ENCODE measurements at regions of chr12 and their contacts with region 1.

Region 1: GRCh38 chr12:751192-751998 is 984 bp upstream of the WNK1 start:
- DNase-seq: peak; percentile 94 to 99
- ATAC-seq: peak; percentile 70 to 85
- H3K4me3 ChIP-seq: peak overlapping the region; percentile 49
- H3K27ac ChIP-seq: peak overlapping the region; percentile 79 to 90
- H3K4me1 ChIP-seq: peaks cover 19% of the 10 kb centered on the region
- CTCF ChIP-seq: peak; percentile 80
- EP300 ChIP-seq: no peak
- POLR2A ChIP-seq: peak; percentile 73
- RAD21 ChIP-seq: peak; percentile 86 to 89

Region 2: GRCh38 chr12:569803-570434 is 181.5 kb before region 1 on chr12:
- CTCF ChIA-PET with region 1: interaction called, 292 read pairs
- POLR2A ChIA-PET with region 1: interaction called, 77 read pairs
- DNase-seq: peak; percentile 87 to 95
- ATAC-seq: peak; percentile 37 to 69
- H3K4me3 ChIP-seq: peak overlapping the region; percentile 62
- H3K27ac ChIP-seq: peak overlapping the region; percentile 97 to 98
- H3K4me1 ChIP-seq: peaks cover 30% of the 10 kb centered on the region
- CTCF ChIP-seq: peak; percentile 92
- EP300 ChIP-seq: no peak
- POLR2A ChIP-seq: no peak
- RAD21 ChIP-seq: peak; percentile 95 to 98

Region 3: GRCh38 chr12:597926-598568 is 153.3 kb before region 1 on chr12:
- CTCF ChIA-PET with region 1: interaction called, 16 read pairs
- POLR2A ChIA-PET with region 1: interaction called, 4 read pairs
- DNase-seq: no peak
- ATAC-seq: peak in 1 of 2 experiments; percentile 53; a peak in 3 of 6 replicates
- H3K4me3 ChIP-seq: no peak overlapping the region
- H3K27ac ChIP-seq: peak overlapping the region in 1 of 2 experiments; percentile 8; a peak in 2 of 6 replicates
- H3K4me1 ChIP-seq: 0 out of 3 replicates have a peak, but pooled peaks cover 3% of the 10 kb centered on the region
- CTCF ChIP-seq: no peak
- EP300 ChIP-seq: no peak
- POLR2A ChIP-seq: no peak
- RAD21 ChIP-seq: no peak

Region 4: DNA sequence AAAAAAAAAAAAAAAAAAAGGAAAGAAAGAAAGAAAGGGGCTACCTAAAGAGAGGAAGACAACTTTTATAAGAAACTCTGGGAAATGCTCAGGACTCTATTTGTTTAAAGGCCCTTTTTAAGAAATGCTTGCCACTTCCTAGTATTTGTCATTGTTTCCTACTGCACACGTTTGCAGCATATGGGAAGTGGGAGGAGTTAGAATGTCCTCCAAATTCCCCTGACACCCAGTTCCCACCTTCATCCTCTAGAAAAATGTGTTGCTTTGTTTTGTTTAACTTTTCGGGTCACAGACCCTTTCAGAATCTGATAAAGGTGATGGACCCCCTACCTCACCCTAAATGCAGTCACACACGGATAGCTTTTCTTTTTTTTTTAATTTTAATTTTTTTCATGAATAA is 129.0 kb before region 1 on chr12:
- CTCF ChIA-PET with region 1: interaction called, 52 read pairs
- POLR2A ChIA-PET with region 1: no interaction called
- DNase-seq: no peak
- ATAC-seq: 0 out of 6 replicates have a peak, but pooled peaks of 1 of the 2 experiments have one; percentile 17
- H3K4me3 ChIP-seq: no peak overlapping the region
- H3K27ac ChIP-seq: peak overlapping the region; percentile 33 to 78; a peak in 4 of 6 replicates
- H3K4me1 ChIP-seq: peaks cover 35% of the 10 kb centered on the region
- CTCF ChIP-seq: no peak
- EP300 ChIP-seq: no peak
- POLR2A ChIP-seq: no peak
- RAD21 ChIP-seq: no peak

Region 5: DNA sequence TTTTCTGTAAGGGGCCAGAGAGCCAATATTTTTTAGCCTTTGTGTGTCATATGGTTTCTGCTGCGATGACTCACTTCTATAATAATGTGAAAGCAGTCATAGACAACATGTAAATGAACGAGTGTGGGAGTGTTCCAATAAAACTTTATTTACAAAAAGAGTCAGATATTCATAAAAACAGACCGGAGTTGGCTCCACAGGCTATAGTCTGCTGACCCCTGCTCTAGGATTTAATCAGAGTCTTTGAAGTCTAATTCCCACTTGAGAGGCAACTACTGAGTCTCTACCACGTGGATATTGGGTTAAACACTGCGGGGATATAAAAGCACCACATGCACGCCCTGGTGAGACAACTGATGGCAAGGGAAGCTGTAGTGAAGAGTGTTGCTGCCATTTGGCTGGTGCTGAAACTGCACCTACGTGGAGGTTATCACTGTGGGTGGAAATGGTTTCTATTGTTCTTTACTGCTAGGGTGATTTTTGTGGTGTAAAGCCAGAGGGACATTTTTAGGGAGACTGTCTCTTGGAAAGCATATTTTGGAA is 84.6 kb before region 1 on chr12:
- CTCF ChIA-PET with region 1: interaction called, 12 read pairs
- POLR2A ChIA-PET with region 1: no interaction called
- DNase-seq: no peak
- ATAC-seq: no peak
- H3K4me3 ChIP-seq: no peak overlapping the region
- H3K27ac ChIP-seq: peak overlapping the region; percentile 48 to 75
- H3K4me1 ChIP-seq: peaks cover 14% of the 10 kb centered on the region
- CTCF ChIP-seq: no peak
- EP300 ChIP-seq: no peak
- POLR2A ChIP-seq: no peak
- RAD21 ChIP-seq: no peak

Region 6: GRCh38 chr12:726281-727140 is 24.9 kb before region 1 on chr12:
- CTCF ChIA-PET with region 1: interaction called, 56 read pairs
- POLR2A ChIA-PET with region 1: interaction called, 4 read pairs
- DNase-seq: peak; percentile 21 to 54
- ATAC-seq: peak; percentile 65 to 70; a peak in 5 of 6 replicates
- H3K4me3 ChIP-seq: no peak overlapping the region
- H3K27ac ChIP-seq: peak overlapping the region; percentile 36 to 61
- H3K4me1 ChIP-seq: peaks cover 32% of the 10 kb centered on the region
- CTCF ChIP-seq: no peak
- EP300 ChIP-seq: no peak
- POLR2A ChIP-seq: no peak
- RAD21 ChIP-seq: no peak

Region 7: GRCh38 chr12:810671-811415 is 59.4 kb after region 1 on chr12:
- CTCF ChIA-PET with region 1: interaction called, 114 read pairs
- POLR2A ChIA-PET with region 1: no interaction called
- DNase-seq: no peak
- ATAC-seq: no peak
- H3K4me3 ChIP-seq: no peak overlapping the region
- H3K27ac ChIP-seq: no peak overlapping the region
- H3K4me1 ChIP-seq: peaks cover 64% of the 10 kb centered on the region
- CTCF ChIP-seq: no peak
- EP300 ChIP-seq: no peak
- POLR2A ChIP-seq: no peak
- RAD21 ChIP-seq: no peak

Region 8: GRCh38 chr12:835754-836518 is 84.5 kb after region 1 on chr12:
- CTCF ChIA-PET with region 1: no interaction called
- POLR2A ChIA-PET with region 1: no interaction called
- DNase-seq: no peak
- ATAC-seq: no peak
- H3K4me3 ChIP-seq: no peak overlapping the region
- H3K27ac ChIP-seq: no peak overlapping the region
- H3K4me1 ChIP-seq: no peaks in the 10 kb centered on the region
- CTCF ChIP-seq: no peak
- EP300 ChIP-seq: no peak
- POLR2A ChIP-seq: no peak
- RAD21 ChIP-seq: no peak

Region 9: GRCh38 chr12:958588-959123 is 207.3 kb after region 1 on chr12:
- CTCF ChIA-PET with region 1: no interaction called
- POLR2A ChIA-PET with region 1: no interaction called
- DNase-seq: no peak
- ATAC-seq: no peak
- H3K4me3 ChIP-seq: no peak overlapping the region
- H3K27ac ChIP-seq: no peak overlapping the region
- H3K4me1 ChIP-seq: peaks cover 3% of the 10 kb centered on the region; the same call in 1 of the 3 replicates
- CTCF ChIP-seq: no peak
- EP300 ChIP-seq: no peak
- POLR2A ChIP-seq: no peak
- RAD21 ChIP-seq: no peak

Measured in A549 (cell line).